Activated B cell treated with CpG ODN at 0.5 μM for 24 hours (primary cell): ENCODE measurements at regions of chr1 and their contacts with region 1.

Region 1: GRCh38 chr1:20165522-20165951 is 20.4 kb upstream of the UBXN10 start:
- DNase-seq: no peak
- ATAC-seq: no peak
- H3K4me3 Mint-ChIP-seq: no peak overlapping the region
- H3K27ac Mint-ChIP-seq: no peak overlapping the region
- H3K4me1 Mint-ChIP-seq: no peaks in the 10 kb centered on the region
- H3K27me3 Mint-ChIP-seq: peaks cover 10% of the 10 kb centered on the region
- CTCF ChIP-seq: no peak

Region 2: GRCh38 chr1:20185834-20186782 is 20.6 kb after region 1 on chr1 and contains the starts of genes PLA2G2C and UBXN10:
- CTCF ChIA-PET with region 1: no interaction called
- POLR2A ChIA-PET with region 1: no interaction called
- intact Hi-C with region 1: loop called (anchors 2 kb)
- DNase-seq: peak; percentile 42
- ATAC-seq: peak; percentile 79
- H3K4me3 Mint-ChIP-seq: peak within 1 kb of the TSS; percentile 77
- H3K27ac Mint-ChIP-seq: peak within 1 kb of the TSS; percentile 1
- H3K4me1 Mint-ChIP-seq: peaks cover 17% of the 10 kb centered on the region
- H3K27me3 Mint-ChIP-seq: peaks cover 48% of the 10 kb centered on the region
- CTCF ChIP-seq: no peak
- total RNA-seq, gene PLA2G2C: not detected in 2 replicates
- total RNA-seq, gene UBXN10: 0.04 and 0.05 TPM in 2 replicates